Posterior vena cava (tissue), 2 donors: ENCODE measurements at regions of chr22 and their contacts with region 1.

Region 1: DNA sequence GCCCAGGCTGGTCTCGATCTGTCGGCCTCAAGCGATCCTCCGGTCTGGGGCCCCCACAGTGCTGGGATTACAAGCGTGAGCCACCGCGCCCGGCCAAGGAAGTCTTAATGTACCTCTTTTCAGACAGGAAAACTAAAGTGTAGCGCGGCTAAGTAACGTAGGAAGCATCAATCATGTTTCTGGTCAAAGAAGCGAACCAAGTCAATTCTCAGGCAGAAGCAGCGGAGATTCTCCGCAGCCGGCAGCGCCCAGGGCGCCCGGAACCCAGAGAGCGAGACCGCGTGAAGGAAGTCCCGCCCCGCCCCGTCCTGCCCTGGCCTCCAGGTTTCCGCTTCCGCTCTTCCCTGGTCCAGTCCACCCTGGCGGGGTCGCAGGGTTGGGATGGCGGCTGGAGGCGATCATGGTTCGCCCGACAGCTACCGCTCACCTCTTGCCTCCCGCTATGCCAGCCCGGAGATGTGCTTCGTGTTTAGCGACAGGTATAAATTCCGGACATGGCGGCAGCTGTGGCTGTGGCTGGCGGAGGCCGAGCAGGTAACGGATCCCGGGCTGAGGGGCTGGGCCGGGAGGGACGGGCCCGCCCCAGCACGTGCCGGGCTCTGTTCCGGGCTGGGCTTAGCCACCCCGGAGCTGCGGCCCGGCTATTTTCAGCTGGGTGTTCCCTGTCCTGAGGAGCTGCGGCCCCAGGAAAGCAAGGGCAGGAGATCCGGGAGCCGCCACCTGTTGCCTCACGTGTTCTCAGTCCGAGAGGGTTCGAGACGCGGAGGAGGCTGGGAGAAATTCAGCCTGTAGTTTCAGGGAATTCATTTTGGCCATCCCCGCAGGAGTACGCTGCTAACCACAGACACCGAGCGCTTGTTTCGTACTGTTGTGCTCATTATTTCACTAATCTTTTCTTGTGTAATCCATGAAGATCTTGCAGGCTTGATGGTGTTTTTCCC is at the start of gene ADSL:
- DNase-seq: peak; percentile 97
- total RNA-seq, gene ADSL: 35.5 to 47.1 TPM

Region 2: GRCh38 chr22:39559454-39560105 is 786.9 kb before region 1 on chr22:
- intact Hi-C with region 1: loop called in 1 of 2 experiments (anchors 10 kb)
- DNase-seq: no peak